ENCODE measurements at regions of chr4 and their contacts with region 1.

Region 1: GRCh38 chr4:16532240-16532970 is 306.1 kb upstream of the TAPT1 start:
- ATAC-seq: peak in 4 of 8 experiments; percentile 7 to 88 (median 63)
- H3K4me3 ChIP-seq: no peak overlapping the region
- H3K27ac ChIP-seq: no peak overlapping the region
- H3K4me1 ChIP-seq: peaks cover 0 to 7% of the 10 kb centered on the region in 2 donors

Region 2: GRCh38 chr4:15778289-15779241 is 753.8 kb before region 1 on chr4 and contains the start of gene CD38:
- in situ Hi-C with region 1: no loop called
- ATAC-seq: peak; percentile 40 to 73 (median 52)
- H3K4me3 ChIP-seq: peak within 1 kb of the TSS; percentile 13 to 26 (median 23)
- H3K27ac ChIP-seq: no peak within 1 kb of the TSS
- H3K4me1 ChIP-seq: no peaks in the 10 kb centered on the region
- total RNA-seq, gene CD38: 0.14 to 2.6 (median 0.71) TPM

Region 3: DNA sequence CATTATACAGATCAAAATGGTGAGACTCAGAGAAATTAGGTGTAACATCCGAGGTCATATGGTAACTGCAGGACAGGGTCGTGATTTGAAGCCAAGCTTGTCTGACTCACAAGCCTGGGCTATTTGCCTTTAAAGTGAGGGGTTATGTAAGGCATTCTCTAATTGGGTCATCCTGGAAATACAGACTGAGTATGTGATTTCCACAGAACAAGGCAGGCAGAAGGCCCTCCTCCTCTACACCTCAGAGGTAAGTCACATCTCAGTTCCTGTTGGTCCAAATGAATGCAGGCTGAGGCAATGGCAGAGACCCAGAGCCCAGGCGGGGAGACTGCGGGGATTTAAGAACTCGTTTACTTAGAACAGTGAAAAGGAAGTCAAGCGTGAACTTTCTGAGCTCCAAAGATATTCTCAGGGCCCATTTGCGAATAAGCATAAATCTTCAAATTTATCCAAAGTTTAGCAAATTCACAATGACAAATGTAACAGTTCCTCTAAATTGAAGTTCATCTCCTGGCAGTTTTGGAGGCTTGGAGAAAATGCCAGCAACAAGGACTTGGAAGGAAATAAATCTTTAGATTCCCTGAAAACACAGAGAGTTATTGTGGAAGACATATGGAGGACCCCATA is 212.7 kb after region 1 on chr4:
- in situ Hi-C with region 1: loop called in 1 of 9 experiments (anchors 25 kb)
- ATAC-seq: peak in 5 of 8 experiments; percentile 26 to 55 (median 29)
- H3K4me3 ChIP-seq: no peak overlapping the region
- H3K27ac ChIP-seq: no peak overlapping the region
- H3K4me1 ChIP-seq: peaks cover 12 to 14% of the 10 kb centered on the region in 2 donors